Cardiac septum (tissue), 1 donor: ENCODE measurements at regions of chr22 and their contacts with region 1.

Region 1: GRCh38 chr22:38506118-38506962 is at the start of gene DDX17:
- DNase-seq: peak; percentile 97
- total RNA-seq, gene DDX17: 215 TPM

Region 2: DNA sequence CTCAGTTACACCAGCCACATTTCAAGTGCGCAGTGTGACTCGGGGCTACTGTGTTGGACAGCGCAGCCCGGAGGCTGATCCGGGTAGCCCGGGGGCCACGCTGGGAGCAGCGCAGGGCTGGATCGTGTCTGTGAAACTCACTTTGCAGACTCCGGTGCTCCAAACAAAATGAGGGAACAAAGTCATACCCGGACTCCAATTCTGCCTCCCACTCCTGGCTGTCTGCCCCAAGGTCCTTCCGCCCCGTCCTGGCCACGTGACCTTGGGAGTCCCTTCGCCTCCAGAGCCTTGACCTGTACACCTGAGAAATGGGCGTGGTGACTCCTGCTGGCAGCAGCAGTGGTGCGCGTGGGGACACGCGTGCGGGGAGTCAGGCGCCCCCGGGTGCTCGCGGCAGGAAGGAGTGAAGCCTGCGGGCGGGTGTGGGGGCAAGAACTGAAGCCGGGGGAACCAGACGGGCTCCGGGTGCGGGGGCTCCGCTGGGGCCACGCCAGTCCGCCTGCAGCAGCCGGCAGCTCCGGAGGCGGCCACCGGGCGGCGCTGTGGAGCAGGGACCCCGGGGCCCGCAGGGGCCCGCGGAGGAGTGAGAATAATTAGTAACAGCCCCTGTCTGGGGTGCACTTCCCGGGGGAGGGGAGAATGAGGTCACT is 93.8 kb before region 1 on chr22:
- intact Hi-C with region 1: no loop called
- DNase-seq: peak; percentile 75

Region 3: DNA sequence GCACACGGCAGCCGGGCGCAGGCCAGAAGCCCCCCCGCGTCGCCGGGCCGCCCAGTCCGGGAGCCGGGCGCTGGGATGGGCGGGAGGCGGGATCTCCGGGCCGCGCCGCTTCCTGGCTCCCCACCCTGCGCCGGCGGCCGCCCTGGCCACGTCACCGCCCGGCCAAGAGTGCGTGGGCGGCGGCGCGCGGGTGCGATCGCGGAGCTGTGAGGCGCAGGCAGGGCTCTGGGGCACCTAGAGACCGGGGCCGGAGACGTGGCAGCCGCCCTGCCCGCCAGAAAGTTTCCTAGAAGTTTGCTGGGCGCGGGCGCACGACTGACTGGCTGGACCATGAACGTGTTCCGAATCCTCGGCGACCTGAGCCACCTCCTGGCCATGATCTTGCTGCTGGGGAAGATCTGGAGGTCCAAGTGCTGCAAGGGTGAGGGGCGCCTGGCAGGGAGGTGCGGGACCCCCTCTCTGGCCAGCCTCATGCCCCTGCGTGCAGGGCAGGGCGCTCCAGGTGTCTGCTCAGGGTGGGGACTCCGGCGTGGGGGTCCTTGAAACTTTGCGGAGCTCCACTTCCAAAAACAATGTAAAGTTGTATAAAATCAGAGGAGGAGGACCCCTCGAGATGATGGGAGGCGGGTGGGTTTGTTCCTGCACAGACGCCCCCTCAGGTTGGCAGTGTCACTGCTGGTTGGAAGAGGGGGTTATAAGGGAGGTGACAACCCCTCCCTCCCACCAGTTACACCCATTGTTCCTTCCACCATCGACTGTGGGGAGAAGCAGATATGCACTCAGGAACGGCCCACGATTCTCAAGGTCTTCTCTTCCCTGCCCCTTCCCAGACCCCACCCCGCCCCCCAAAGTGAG is 38.2 kb before region 1 on chr22 and contains the start of gene KDELR3:
- intact Hi-C with region 1: loop called (anchors 5 kb)
- DNase-seq: no peak
- total RNA-seq, gene KDELR3: 18.2 TPM

Region 4: GRCh38 chr22:38540701-38541100 is 34.4 kb after region 1 on chr22:
- intact Hi-C with region 1: no loop called
- DNase-seq: no peak